Naive thymus-derived CD8-positive, alpha-beta T cell (primary cell): ENCODE measurements at regions of chr22 and their contacts with region 1.

Region 1: DNA sequence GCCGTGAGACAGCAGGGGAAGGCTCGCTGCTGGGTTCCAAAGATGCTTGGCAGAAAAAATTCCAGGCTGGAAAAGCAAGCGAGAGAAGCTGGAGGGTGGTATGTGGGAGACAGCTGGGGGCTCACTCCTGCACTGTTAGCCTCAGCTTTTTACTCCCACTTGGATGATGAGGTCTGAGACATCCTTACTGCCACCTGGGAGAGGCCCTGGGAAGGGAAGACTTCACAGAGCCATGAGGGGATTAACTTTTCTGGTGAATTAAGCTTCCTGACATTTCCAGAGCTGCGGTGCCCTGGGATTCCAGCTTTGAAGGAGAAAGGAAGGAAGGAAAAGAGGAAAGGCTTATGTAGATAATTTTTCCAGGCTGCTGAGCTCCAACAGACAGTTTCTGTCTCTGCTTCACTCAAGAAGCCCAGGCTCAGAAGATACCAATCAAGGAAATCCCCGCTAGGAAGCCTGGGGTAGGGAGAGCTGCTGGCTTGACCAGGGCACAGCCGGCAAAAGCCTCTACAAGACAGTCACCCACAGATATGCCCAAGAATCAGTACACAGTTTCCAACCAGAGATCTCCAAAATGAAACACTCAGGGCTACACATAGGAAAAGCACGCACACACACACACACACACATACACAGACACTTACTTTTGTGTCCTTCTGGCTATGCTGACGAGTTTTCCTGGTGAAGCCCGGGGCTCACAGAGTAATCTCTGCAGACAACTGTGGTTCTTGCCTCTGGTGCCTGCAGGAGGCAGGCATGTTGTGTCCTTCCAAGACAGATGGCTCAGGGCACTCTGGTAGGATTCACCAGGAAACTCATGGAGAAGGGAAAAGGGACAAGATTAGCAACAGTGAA is 907 bp downstream of the MCHR1 start:
- DNase-seq: no peak
- ATAC-seq: no peak
- H3K4me3 Mint-ChIP-seq: no peak overlapping the region
- H3K27ac Mint-ChIP-seq: peak overlapping the region in 1 of 10 donors; percentile 80
- H3K4me1 Mint-ChIP-seq: peaks cover 9 to 22% (median 15%) of the 10 kb centered on the region in 4 donors
- H3K27me3 Mint-ChIP-seq: peaks cover 0 to 25% (median 11%) of the 10 kb centered on the region in 5 donors

Region 2: GRCh38 chr22:40728731-40729189 is 48.6 kb after region 1 on chr22:
- POLR2A ChIA-PET with region 1: interaction called, 14 read pairs
- DNase-seq: peak; percentile 43 to 91 (median 74)
- ATAC-seq: peak; percentile 73 to 79
- H3K4me3 Mint-ChIP-seq: peak overlapping the region; percentile 46 to 82 (median 73)
- H3K27ac Mint-ChIP-seq: peak overlapping the region; percentile 95 to 99 (median 96)
- H3K4me1 Mint-ChIP-seq: peaks cover 25 to 63% (median 59%) of the 10 kb centered on the region in 4 donors
- H3K27me3 Mint-ChIP-seq: no peaks in the 10 kb centered on the region

Region 3: GRCh38 chr22:40759294-40759840 is 79.2 kb after region 1 on chr22:
- POLR2A ChIA-PET with region 1: interaction called, 20 read pairs
- DNase-seq: no peak
- ATAC-seq: no peak
- H3K4me3 Mint-ChIP-seq: no peak overlapping the region
- H3K27ac Mint-ChIP-seq: peak overlapping the region in 1 of 10 donors; percentile 41
- H3K4me1 Mint-ChIP-seq: peaks cover 3 to 17% (median 5%) of the 10 kb centered on the region in 4 donors
- H3K27me3 Mint-ChIP-seq: no peaks in the 10 kb centered on the region